ENCODE measurements at regions of chr21 and their contacts with region 1.

Region 1: DNA sequence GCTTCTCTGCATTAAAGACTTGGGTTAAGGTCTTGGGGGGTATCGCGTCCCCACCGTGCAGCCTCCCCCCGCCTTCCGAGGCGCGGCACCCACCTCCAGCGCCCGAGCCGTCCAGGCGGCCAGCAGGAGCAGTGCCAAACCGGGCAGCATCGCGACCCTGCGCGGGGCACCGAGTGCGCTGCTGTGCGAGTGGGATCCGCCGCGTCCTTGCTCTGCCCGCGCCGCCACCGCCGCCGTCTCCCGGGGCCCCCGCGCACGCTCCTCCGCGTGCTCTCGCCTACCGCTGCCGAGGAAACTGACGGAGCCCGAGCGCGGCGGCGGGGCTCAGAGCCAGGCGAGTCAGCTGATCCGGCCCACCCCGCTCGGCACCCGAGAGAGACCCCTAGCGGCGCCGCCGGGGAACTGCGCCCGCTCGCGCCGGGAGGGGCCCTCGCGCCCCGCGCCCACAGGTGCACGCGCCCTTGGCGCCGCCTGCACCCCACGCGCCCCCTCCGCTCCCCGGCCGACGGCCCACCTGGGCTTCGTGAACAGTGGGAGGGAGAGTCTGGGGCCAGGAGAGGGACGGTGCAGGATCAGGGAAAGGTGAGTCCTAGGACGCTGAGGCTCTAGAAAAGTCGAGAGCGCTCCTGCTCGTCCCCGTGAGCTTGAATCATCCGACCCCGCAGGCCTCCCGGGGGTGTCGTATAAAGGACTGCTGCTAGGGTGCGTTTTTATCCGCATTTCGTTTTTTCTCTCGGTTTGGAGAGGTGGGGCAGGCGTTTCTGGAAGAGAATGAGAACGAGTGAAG is at the start of gene APP:
- DNase-seq: peak; percentile 89 to 90
- ATAC-seq: peak; percentile 75 to 92 (median 90)
- H3K4me3 ChIP-seq: peak within 1 kb of the TSS; percentile 70 to 97 (median 88)
- H3K27ac ChIP-seq: peak within 1 kb of the TSS; percentile 76 to 97 (median 93)
- H3K4me1 ChIP-seq: peaks cover 0 to 48% (median 32%) of the 10 kb centered on the region in 9 donors
- H3K27me3 ChIP-seq: no peaks in the 10 kb centered on the region
- CTCF ChIP-seq: peak; percentile 83 to 100 (median 99)
- total RNA-seq, gene APP: 324 to 434 (median 398) TPM

Region 2: GRCh38 chr21:25887166-25887565 is 283.5 kb before region 1 on chr21:
- intact Hi-C with region 1: loop called in 8 of 10 experiments (anchors 5 kb)
- DNase-seq: no peak
- ATAC-seq: no peak
- H3K4me3 ChIP-seq: no peak overlapping the region
- H3K27ac ChIP-seq: no peak overlapping the region
- H3K4me1 ChIP-seq: peaks cover 0 to 30% (median 12%) of the 10 kb centered on the region in 9 donors
- H3K27me3 ChIP-seq: no peaks in the 10 kb centered on the region
- CTCF ChIP-seq: no peak

Region 3: GRCh38 chr21:25970254-25970930 is 200.3 kb before region 1 on chr21:
- intact Hi-C with region 1: loop called in 1 of 10 experiments (anchors 10 kb)
- DNase-seq: peak in 1 of 2 donors; percentile 20
- ATAC-seq: peak in 6 of 8 donors; percentile 25 to 64 (median 51)
- H3K4me3 ChIP-seq: peak overlapping the region in 3 of 10 donors; percentile 16 to 21 (median 20)
- H3K27ac ChIP-seq: peak overlapping the region in 8 of 10 donors; percentile 9 to 78 (median 41)
- H3K4me1 ChIP-seq: peaks cover 0 to 46% (median 19%) of the 10 kb centered on the region in 9 donors
- H3K27me3 ChIP-seq: no peaks in the 10 kb centered on the region
- CTCF ChIP-seq: no peak

Region 4: GRCh38 chr21:25997788-25998611 is 172.7 kb before region 1 on chr21:
- intact Hi-C with region 1: loop called in 1 of 10 experiments (anchors 10 kb)
- DNase-seq: peak in 1 of 2 donors; percentile 17
- ATAC-seq: peak in 7 of 8 donors; percentile 34 to 85 (median 76)
- H3K4me3 ChIP-seq: no peak overlapping the region
- H3K27ac ChIP-seq: peak overlapping the region in 4 of 10 donors; percentile 28 to 47 (median 34)
- H3K4me1 ChIP-seq: peaks cover 0 to 33% (median 5%) of the 10 kb centered on the region in 9 donors
- H3K27me3 ChIP-seq: no peaks in the 10 kb centered on the region
- CTCF ChIP-seq: no peak

Region 5: GRCh38 chr21:26105819-26106218 is 64.8 kb before region 1 on chr21:
- intact Hi-C with region 1: no loop called
- DNase-seq: no peak
- ATAC-seq: peak in 5 of 8 donors; percentile 25 to 69 (median 39)
- H3K4me3 ChIP-seq: no peak overlapping the region
- H3K27ac ChIP-seq: no peak overlapping the region
- H3K4me1 ChIP-seq: peaks cover 0 to 27% (median 6%) of the 10 kb centered on the region in 9 donors
- H3K27me3 ChIP-seq: no peaks in the 10 kb centered on the region
- CTCF ChIP-seq: no peak

Region 6: GRCh38 chr21:26116456-26117011 is 54.1 kb before region 1 on chr21:
- intact Hi-C with region 1: loop called in 1 of 10 experiments (anchors 5 kb)
- DNase-seq: no peak
- ATAC-seq: peak in 5 of 8 donors; percentile 26 to 71 (median 36)
- H3K4me3 ChIP-seq: peak overlapping the region in 2 of 10 donors; percentile 6 to 25
- H3K27ac ChIP-seq: peak overlapping the region in 9 of 10 donors; percentile 49 to 86 (median 67)
- H3K4me1 ChIP-seq: peaks cover 0 to 62% (median 45%) of the 10 kb centered on the region in 9 donors
- H3K27me3 ChIP-seq: no peaks in the 10 kb centered on the region
- CTCF ChIP-seq: no peak

Region 7: DNA sequence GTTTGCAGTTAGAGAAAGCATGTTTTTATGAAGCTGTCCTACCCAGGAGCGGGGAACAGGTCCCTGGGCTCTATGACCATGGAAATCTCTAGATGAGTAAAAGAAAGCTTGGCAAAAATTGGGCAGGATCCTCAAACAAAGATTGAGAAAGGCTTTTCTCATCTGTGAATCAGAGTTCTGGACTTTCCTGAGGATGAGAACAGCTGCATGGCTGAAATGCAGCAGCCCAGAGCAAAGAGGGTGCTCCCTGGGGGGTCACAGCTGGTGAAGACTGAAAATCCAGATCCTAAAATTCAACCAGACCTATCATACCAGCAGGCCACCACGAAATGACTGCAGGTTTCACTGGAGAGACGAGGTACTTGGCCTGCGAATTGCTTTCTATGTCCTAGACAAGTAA is 65.6 kb after region 1 on chr21:
- intact Hi-C with region 1: no loop called
- DNase-seq: no peak
- ATAC-seq: no peak
- H3K4me3 ChIP-seq: no peak overlapping the region
- H3K27ac ChIP-seq: no peak overlapping the region
- H3K4me1 ChIP-seq: peaks cover 0 to 5% (median 0%) of the 10 kb centered on the region in 9 donors
- H3K27me3 ChIP-seq: no peaks in the 10 kb centered on the region
- CTCF ChIP-seq: no peak

Region 8: GRCh38 chr21:26565111-26565510 is 394.4 kb after region 1 on chr21:
- intact Hi-C with region 1: loop called in 1 of 10 experiments (anchors 10 kb)
- DNase-seq: no peak
- ATAC-seq: peak in 1 of 8 donors; percentile 37
- H3K4me3 ChIP-seq: peak overlapping the region in 1 of 10 donors; percentile 6
- H3K27ac ChIP-seq: peak overlapping the region; percentile 9 to 94 (median 62)
- H3K4me1 ChIP-seq: peaks cover 0 to 56% (median 16%) of the 10 kb centered on the region in 9 donors
- H3K27me3 ChIP-seq: no peaks in the 10 kb centered on the region
- CTCF ChIP-seq: no peak

Measured in heart right ventricle (tissue), 16 donors.